ENCODE measurements at regions of chr19 and their contacts with region 1.

Region 1: GRCh38 chr19:32691291-32691951 is at the start of gene NUDT19:
- DNase-seq: peak; percentile 78
- H3K4me3 Mint-ChIP-seq: peak within 1 kb of the TSS; percentile 95
- H3K27ac Mint-ChIP-seq: peak within 1 kb of the TSS; percentile 94
- H3K4me1 Mint-ChIP-seq: peaks cover 42% of the 10 kb centered on the region
- H3K27me3 Mint-ChIP-seq: no peaks in the 10 kb centered on the region
- total RNA-seq, gene NUDT19: 25.0 and 25.6 TPM in 2 replicates

Region 2: GRCh38 chr19:32181216-32181920 is 510.1 kb before region 1 on chr19:
- intact Hi-C with region 1: no loop called
- DNase-seq: no peak
- H3K4me3 Mint-ChIP-seq: no peak overlapping the region
- H3K27ac Mint-ChIP-seq: no peak overlapping the region
- H3K4me1 Mint-ChIP-seq: no peaks in the 10 kb centered on the region
- H3K27me3 Mint-ChIP-seq: no peaks in the 10 kb centered on the region

Region 3: GRCh38 chr19:32674959-32675719 is 16.3 kb before region 1 on chr19 and contains the start of gene ANKRD27:
- intact Hi-C with region 1: loop called (anchors 1 kb)
- DNase-seq: peak; percentile 96
- H3K4me3 Mint-ChIP-seq: peak within 1 kb of the TSS; percentile 95
- H3K27ac Mint-ChIP-seq: peak within 1 kb of the TSS; percentile 84
- H3K4me1 Mint-ChIP-seq: peaks cover 26% of the 10 kb centered on the region
- H3K27me3 Mint-ChIP-seq: peaks cover 15% of the 10 kb centered on the region
- total RNA-seq, gene ANKRD27: 35.6 and 38.3 TPM in 2 replicates

Region 4: GRCh38 chr19:33125929-33126388 is 434.5 kb after region 1 on chr19:
- intact Hi-C with region 1: loop called (anchors 5 kb)
- DNase-seq: peak; percentile 31
- H3K4me3 Mint-ChIP-seq: no peak overlapping the region
- H3K27ac Mint-ChIP-seq: no peak overlapping the region
- H3K4me1 Mint-ChIP-seq: peaks cover 11% of the 10 kb centered on the region
- H3K27me3 Mint-ChIP-seq: no peaks in the 10 kb centered on the region